ENCODE measurements at regions of chr2 and their contacts with region 1.

Region 1: DNA sequence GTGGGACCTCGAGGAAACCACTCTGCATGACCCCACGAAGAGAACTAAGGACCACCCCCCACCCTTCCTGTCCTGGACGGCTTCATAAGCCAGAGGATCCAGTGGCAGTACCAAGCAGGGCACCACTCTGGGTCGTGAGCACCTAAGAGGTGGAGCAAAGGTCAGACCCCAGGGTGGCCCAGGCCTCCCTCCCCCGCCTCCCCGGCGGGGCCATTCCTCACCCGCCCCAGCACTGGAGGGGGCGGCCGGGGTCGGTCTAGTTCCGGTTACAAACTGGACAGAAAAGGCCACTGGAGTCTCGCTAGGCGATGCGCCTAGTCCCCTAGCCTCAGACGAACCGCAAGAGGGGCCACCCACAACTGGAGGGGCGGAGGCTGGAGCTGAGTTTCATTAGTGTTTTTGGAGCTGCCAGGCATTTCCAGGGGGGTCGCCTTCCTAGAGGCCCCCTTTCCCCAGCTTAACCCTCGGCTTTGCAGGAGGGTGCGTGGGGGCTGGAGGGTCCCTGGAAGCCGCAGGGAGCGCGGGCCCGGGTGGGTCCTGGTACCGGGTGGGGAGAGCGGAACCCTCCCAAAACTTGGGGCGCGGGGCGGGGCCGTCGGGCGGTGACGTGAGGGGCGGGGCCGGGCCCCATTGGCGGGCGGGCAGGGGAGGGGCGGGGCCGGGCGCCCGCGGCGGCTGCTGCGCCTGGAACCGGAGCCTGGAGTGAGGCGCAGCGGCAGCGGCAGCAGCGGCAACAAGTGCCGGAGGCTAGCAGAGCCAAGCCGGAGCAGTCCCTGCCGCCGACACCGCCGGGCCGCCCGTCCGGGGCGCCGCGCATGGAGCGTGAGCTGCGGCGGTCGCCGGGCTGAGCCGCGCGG is at the start of gene B3GNT2:
- DNase-seq: peak; percentile 81
- ATAC-seq: peak; percentile 81
- H3K4me3 Mint-ChIP-seq: peak within 1 kb of the TSS; percentile 92
- H3K27ac Mint-ChIP-seq: peak within 1 kb of the TSS; percentile 89
- H3K4me1 Mint-ChIP-seq: peaks cover 38% of the 10 kb centered on the region
- H3K27me3 Mint-ChIP-seq: no peaks in the 10 kb centered on the region
- CTCF ChIP-seq: no peak
- total RNA-seq, gene B3GNT2: 34.0 and 34.9 TPM in 2 replicates

Region 2: DNA sequence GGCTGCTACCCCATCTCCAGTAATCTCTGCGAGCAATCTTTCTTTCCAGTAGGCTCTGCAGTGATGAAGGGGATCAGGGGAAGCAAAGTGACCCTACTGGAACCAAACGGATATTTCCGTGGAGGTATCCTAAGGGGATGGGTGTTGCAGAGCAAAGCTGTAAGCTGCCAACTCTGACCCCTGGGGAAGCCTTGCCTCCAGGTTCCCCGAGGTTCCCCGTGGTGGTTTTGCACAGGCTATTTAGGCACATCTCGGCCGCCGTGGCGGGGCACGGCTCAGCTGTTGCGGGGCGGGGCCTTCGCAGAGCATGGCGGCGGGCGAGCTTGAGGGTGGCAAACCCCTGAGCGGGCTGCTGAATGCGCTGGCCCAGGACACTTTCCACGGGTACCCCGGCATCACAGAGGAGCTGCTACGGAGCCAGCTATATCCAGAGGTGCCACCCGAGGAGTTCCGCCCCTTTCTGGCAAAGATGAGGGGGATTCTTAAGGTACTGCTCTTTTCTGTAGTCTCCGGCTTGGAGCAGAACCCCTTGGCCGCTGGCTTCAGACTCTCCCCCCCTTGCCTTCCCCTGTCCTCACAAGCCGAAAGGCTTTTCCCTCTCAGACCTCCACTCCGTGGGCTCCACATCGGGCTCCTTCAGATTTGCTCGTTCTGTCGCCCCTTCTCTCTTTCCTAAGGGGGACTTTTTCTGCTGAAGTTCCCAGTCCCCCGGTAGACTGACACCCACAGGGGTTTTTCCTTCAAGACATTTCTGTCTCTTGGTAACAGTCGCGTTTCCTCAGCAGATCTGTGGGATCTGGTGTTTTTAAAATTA is 290.1 kb before region 1 on chr2 and contains the start of gene COMMD1:
- CTCF ChIA-PET with region 1: no interaction called
- POLR2A ChIA-PET with region 1: no interaction called
- intact Hi-C with region 1: loop called (anchors 5 kb)
- DNase-seq: peak; percentile 78
- ATAC-seq: peak; percentile 100
- H3K4me3 Mint-ChIP-seq: peak within 1 kb of the TSS; percentile 97
- H3K27ac Mint-ChIP-seq: peak within 1 kb of the TSS; percentile 86
- H3K4me1 Mint-ChIP-seq: peaks cover 11% of the 10 kb centered on the region
- H3K27me3 Mint-ChIP-seq: no peaks in the 10 kb centered on the region
- CTCF ChIP-seq: no peak
- total RNA-seq, gene COMMD1: 36.8 and 37.1 TPM in 2 replicates

Region 3: GRCh38 chr2:62133320-62133823 is 62.3 kb before region 1 on chr2:
- CTCF ChIA-PET with region 1: no interaction called
- POLR2A ChIA-PET with region 1: no interaction called
- intact Hi-C with region 1: loop called (anchors 5 kb)
- DNase-seq: no peak
- ATAC-seq: no peak
- H3K4me3 Mint-ChIP-seq: no peak overlapping the region
- H3K27ac Mint-ChIP-seq: no peak overlapping the region
- H3K4me1 Mint-ChIP-seq: peaks cover 34% of the 10 kb centered on the region
- H3K27me3 Mint-ChIP-seq: no peaks in the 10 kb centered on the region
- CTCF ChIP-seq: no peak

Region 4: DNA sequence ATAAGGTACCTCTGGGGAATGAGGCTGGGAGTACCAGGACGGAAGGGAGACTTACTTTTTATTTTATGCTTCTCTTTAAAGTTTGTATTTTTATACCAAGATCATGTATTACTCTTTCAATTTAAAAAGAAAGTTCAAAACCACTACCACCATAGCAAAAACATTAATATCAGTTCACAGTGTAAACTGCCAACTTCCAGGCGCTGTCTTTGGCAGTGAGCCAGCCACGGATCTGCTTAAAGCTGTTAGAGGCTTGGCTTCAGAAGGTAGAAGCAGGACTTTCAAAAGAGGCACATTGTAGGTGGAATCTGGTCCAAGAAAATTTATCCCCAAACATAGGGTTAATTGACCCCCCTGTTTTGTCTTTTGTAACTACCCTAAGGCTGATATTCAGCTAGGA is 75.1 kb after region 1 on chr2:
- CTCF ChIA-PET with region 1: no interaction called
- POLR2A ChIA-PET with region 1: no interaction called
- intact Hi-C with region 1: no loop called
- DNase-seq: no peak
- ATAC-seq: no peak
- H3K4me3 Mint-ChIP-seq: no peak overlapping the region
- H3K27ac Mint-ChIP-seq: no peak overlapping the region
- H3K4me1 Mint-ChIP-seq: no peaks in the 10 kb centered on the region
- H3K27me3 Mint-ChIP-seq: peaks cover 3% of the 10 kb centered on the region
- CTCF ChIP-seq: no peak

Region 5: GRCh38 chr2:62313449-62314227 is 118.0 kb after region 1 on chr2:
- CTCF ChIA-PET with region 1: no interaction called
- POLR2A ChIA-PET with region 1: interaction called, 5 read pairs
- intact Hi-C with region 1: loop called (anchors 2 kb)
- DNase-seq: peak; percentile 32
- ATAC-seq: peak; percentile 99
- H3K4me3 Mint-ChIP-seq: peak overlapping the region; percentile 63
- H3K27ac Mint-ChIP-seq: peak overlapping the region; percentile 72
- H3K4me1 Mint-ChIP-seq: peaks cover 65% of the 10 kb centered on the region
- H3K27me3 Mint-ChIP-seq: no peaks in the 10 kb centered on the region
- CTCF ChIP-seq: no peak

Region 6: DNA sequence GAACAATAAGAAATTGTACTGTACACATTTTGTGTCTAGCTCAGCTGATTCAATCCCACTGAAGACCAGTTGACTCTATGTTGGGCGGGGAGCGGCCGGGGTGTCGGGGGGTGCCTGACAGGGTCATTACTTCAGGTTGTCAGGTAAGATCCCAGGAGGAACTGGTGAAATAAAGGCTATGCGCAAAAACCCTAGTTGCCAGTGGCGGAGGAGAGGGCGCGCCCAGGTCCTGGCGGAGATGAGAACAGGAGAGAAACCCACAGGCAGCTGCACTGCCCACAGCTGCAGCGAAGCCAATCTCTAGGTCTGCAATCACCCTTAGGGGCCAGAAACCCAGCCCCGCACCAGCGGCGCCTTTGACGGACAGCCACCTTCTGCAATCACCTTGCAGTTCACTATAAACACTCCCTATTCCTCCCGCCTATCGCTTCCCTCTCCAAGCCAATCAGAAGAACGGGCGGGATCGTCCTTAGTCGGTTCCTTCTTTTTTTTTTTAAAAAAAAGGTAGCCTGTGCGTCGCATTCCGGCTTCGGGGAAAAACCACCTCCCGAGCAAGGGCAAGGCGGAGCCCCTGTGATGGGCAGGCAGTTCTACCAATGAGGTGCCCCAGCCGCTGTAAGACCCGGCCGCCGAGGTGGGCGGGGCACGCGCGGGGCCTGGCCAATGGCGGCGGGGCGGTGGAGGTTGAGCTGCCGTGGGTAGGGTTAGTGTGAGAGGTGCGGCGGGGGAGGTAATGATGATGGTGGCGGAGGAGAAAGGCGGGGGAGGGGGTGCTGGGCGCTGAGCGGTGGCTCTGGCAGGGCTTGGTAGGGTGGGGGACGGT is 509.6 kb after region 1 on chr2 and contains the start of gene EHBP1:
- CTCF ChIA-PET with region 1: no interaction called
- POLR2A ChIA-PET with region 1: no interaction called
- intact Hi-C with region 1: loop called (anchors 2 kb)
- DNase-seq: peak; percentile 98
- ATAC-seq: peak; percentile 93
- H3K4me3 Mint-ChIP-seq: peak within 1 kb of the TSS; percentile 95
- H3K27ac Mint-ChIP-seq: peak within 1 kb of the TSS; percentile 78
- H3K4me1 Mint-ChIP-seq: peaks cover 34% of the 10 kb centered on the region
- H3K27me3 Mint-ChIP-seq: no peaks in the 10 kb centered on the region
- CTCF ChIP-seq: no peak
- total RNA-seq, gene EHBP1: 24.0 and 25.0 TPM in 2 replicates

Measured in activated B cell treated with CpG ODN at 0.5 μM for 24 hours (primary cell).